Natural killer cell (primary cell): ENCODE measurements at regions of chr3 and their contacts with region 1.

Region 1: DNA sequence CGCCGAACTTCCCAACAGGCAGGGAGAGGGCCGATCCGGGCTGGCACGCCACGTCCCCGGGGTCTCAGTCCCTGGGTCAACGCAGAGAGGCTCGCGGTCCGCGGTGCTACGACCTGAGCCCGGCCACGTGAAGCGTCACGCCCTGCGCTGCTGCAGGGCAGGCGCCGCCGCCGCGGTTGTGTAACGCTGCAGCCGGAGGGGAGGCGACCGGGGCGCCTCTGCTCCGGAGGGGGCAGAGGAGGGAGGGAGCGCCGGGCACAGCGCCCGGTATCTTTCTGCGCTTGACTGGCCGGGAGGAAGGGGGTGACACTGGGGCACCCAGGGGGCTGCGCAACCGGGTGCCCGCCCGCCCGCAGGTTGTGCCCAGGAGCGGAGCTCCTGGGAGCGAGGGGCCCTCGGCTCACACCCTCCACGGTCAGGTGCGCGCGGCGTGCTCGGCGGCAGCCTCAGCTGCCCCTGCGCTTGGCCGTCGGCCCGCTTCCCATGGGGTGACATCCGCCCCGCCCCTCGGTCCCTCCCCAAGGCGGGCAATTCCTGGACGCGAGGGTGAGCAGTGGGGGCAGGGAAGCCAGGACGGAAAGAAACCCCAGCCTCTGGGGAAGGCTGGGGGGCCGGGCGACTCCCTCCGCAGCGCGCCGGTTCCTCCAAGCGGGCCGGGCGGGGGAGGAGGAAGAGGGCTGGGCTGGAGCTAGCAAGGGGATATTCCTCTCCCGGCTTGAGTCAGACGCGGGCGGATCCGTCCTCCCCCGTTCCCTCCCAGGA is 852 bp upstream of the BHLHE40 start:
- DNase-seq: peak; percentile 85 to 88
- ATAC-seq: peak; percentile 44 to 66 (median 55)
- H3K4me3 ChIP-seq: peak overlapping the region; percentile 86
- H3K4me3 Mint-ChIP-seq: peak overlapping the region; percentile 99
- H3K27ac ChIP-seq: peak overlapping the region; percentile 96
- H3K27ac Mint-ChIP-seq: peak overlapping the region; percentile 98 to 100
- H3K4me1 ChIP-seq: peaks cover 39% of the 10 kb centered on the region
- H3K4me1 Mint-ChIP-seq: peaks cover 60 to 61% of the 10 kb centered on the region in 2 donors
- H3K27me3 ChIP-seq: no peaks in the 10 kb centered on the region
- H3K27me3 Mint-ChIP-seq: no peaks in the 10 kb centered on the region
- CTCF ChIP-seq: no peak

Region 2: GRCh38 chr3:3240986-3241385 is 1737.4 kb before region 1 on chr3:
- intact Hi-C with region 1: no loop called
- DNase-seq: no peak
- ATAC-seq: no peak
- H3K4me3 ChIP-seq: no peak overlapping the region
- H3K4me3 Mint-ChIP-seq: no peak overlapping the region
- H3K27ac ChIP-seq: no peak overlapping the region
- H3K27ac Mint-ChIP-seq: no peak overlapping the region
- H3K4me1 ChIP-seq: no peaks in the 10 kb centered on the region
- H3K4me1 Mint-ChIP-seq: no peaks in the 10 kb centered on the region
- H3K27me3 ChIP-seq: no peaks in the 10 kb centered on the region
- H3K27me3 Mint-ChIP-seq: peaks cover 3 to 10% of the 10 kb centered on the region in 2 donors
- CTCF ChIP-seq: no peak

Region 3: DNA sequence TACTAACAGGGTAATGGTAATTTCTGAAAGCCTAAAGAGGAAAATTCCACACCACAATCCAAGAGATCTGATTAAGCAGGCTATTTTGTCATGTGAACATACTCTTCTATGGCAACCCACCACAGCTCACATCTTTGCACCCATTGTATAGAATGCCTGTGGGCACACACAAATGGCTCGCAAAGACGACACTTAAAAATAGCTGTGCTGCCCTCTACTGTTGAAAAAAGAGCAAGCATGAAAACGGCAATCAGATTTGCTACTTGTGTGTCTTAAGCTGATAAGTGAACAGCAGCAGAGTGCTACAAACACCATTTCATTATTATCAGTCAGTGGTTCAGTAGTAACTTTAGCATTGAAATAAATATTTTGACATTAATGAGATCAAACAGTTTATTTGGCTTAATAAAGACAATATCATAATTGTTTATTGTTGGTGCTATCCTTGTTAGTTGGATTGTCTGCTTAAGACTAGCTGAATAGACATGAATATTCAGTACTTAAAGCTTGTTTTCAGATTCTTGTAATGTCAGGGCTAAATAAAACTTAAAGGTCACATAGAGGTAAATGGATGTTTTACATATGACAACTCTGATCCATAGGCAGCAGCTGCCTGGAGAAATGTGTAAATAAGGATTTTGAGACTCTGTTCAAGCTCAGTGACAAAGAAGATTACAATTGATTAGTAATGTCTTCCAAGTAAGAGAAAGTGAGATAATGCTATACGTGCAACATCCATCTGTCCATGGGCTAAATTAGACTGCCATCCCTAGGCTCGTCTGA is 980.1 kb before region 1 on chr3:
- intact Hi-C with region 1: no loop called
- DNase-seq: peak in 1 of 2 donors; percentile 46
- ATAC-seq: peak in 2 of 3 donors; percentile 44 to 57
- H3K4me3 ChIP-seq: no peak overlapping the region
- H3K4me3 Mint-ChIP-seq: no peak overlapping the region
- H3K27ac ChIP-seq: no peak overlapping the region
- H3K27ac Mint-ChIP-seq: no peak overlapping the region
- H3K4me1 ChIP-seq: no peaks in the 10 kb centered on the region
- H3K4me1 Mint-ChIP-seq: no peaks in the 10 kb centered on the region
- H3K27me3 ChIP-seq: no peaks in the 10 kb centered on the region
- H3K27me3 Mint-ChIP-seq: no peaks in the 10 kb centered on the region
- CTCF ChIP-seq: peak; percentile 57

Region 4: DNA sequence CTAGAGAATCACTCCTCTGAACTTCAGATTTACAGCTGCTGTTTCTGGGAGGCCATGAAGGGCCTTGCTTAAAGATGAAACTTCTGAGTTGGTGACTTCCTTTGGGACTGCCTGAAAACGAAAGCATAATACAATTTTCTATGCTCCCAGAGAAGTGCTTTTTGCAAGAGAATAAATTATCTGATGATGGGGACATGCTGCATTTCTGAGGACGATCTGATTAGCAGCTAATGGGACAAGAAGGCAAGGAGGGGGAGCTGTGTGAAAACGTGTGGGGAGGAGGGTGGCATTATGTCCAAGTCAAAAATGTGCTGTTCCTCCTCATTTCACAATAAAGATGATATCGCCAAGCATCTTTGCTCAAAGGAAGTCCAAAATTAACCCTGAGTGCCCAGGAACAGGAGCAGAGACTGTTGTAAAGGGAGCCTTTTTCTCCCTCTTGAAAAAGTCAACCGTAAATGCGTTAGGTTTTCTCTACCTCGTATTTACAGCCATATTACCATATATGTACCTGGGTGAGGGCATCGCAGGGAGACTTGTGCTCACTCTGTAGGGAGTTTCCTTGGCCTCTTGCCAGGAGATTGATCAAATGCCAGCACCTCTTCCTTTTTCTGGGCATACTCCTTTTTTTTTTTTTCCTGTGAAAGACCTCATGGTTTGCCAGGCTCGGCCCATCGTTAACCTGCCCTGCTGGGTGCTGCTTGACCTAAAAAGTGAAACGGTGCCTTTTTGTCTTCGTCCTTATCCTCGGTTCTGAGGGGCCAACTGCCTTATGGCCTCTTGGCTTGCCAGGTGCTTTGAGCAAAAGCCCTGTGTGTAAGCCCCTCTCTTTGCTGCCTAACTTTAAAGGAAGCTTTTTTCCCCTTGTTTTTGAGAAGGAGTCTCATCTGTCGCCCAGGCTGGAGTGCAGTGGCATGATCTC is 473.8 kb before region 1 on chr3:
- intact Hi-C with region 1: loop called (anchors 10 kb)
- DNase-seq: peak; percentile 17 to 84
- ATAC-seq: peak; percentile 52 to 77 (median 67)
- H3K4me3 ChIP-seq: peak overlapping the region; percentile 16
- H3K4me3 Mint-ChIP-seq: peak overlapping the region; percentile 90
- H3K27ac ChIP-seq: peak overlapping the region; percentile 70
- H3K27ac Mint-ChIP-seq: peak overlapping the region; percentile 80 to 92
- H3K4me1 ChIP-seq: peaks cover 28% of the 10 kb centered on the region
- H3K4me1 Mint-ChIP-seq: peaks cover 50 to 53% of the 10 kb centered on the region in 2 donors
- H3K27me3 ChIP-seq: no peaks in the 10 kb centered on the region
- H3K27me3 Mint-ChIP-seq: no peaks in the 10 kb centered on the region
- CTCF ChIP-seq: no peak

Region 5: DNA sequence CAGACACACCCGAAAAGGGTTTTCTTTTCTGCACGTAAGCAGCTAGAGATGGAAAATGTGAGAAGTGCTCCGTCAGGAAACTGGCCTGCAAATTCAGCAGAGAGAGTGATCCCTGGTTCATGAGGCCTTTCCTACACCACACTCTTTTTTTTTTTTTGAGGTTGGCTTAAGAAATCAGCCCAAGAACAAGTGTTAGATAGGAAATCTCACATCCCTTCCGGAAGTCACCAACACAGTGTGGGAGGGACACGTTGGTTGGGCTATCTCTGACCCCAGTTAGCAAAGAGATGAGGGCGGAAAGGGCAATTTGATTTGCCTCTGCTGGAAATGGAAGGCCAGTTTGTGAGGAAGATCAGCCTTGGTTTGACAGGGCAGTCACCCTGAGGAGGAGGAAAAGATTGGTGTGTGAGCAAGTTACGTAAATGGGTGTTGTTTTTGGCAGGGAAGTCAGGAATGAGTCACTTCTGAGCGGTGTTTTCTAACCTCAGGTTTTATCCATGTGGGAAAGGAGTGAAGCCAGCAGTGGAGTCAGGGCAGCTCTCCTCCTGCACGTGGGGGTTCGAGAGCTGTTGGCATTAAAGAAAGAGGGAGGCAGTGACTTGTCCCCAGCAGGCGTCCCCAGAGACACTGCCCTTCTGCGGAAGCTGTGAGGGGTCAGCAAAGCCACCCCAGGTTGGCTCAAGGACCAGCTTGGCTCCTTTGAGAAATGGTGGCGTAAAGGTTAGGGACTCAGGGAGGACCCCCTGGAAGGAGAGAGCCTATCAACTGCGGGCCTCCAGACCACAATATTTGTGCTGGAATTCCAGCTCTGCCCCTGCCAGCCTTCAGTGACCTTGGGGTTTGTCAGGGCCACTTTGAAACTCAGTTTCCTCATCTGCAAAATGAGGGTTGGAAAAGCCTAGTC is 236.7 kb before region 1 on chr3:
- intact Hi-C with region 1: loop called (anchors 2 kb)
- DNase-seq: peak; percentile 30 to 31
- ATAC-seq: peak; percentile 27 to 59 (median 57)
- H3K4me3 ChIP-seq: no peak overlapping the region
- H3K4me3 Mint-ChIP-seq: peak overlapping the region; percentile 78
- H3K27ac ChIP-seq: peak overlapping the region; percentile 81
- H3K27ac Mint-ChIP-seq: peak overlapping the region; percentile 88 to 92
- H3K4me1 ChIP-seq: peaks cover 57% of the 10 kb centered on the region
- H3K4me1 Mint-ChIP-seq: peaks cover 77 to 78% of the 10 kb centered on the region in 2 donors
- H3K27me3 ChIP-seq: no peaks in the 10 kb centered on the region
- H3K27me3 Mint-ChIP-seq: no peaks in the 10 kb centered on the region
- CTCF ChIP-seq: no peak

Region 6: DNA sequence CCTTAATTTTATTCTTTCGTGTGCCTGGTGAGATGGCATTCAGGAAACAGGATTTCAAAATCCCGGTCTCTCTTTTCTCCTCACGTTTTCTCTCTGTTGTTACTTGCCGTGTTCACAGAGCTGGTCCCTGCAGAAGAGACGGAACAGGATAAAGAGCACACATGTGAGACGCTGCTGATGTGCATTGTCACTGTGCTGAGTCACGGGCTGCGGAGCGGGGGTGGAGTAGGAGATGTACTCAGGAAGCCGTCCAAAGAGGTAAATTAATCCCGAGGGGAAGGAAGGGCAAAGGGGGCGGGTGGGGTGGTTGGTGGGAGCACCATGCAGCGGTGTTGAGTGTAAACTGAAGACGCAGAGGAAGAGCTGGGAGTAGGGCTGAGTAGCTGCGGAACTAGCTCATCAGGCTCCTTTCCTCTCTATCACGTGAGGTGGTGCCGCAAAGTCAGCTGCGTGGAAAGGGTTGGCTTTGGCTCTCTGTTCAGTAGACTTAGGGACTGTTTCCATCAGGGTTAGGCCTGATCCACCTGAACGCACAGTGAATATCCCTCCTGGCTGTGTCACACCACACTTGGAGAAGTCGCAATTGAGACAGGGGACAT is 164.0 kb before region 1 on chr3:
- intact Hi-C with region 1: no loop called
- DNase-seq: no peak
- ATAC-seq: no peak
- H3K4me3 ChIP-seq: no peak overlapping the region
- H3K4me3 Mint-ChIP-seq: no peak overlapping the region
- H3K27ac ChIP-seq: no peak overlapping the region
- H3K27ac Mint-ChIP-seq: peak overlapping the region; percentile 45 to 51
- H3K4me1 ChIP-seq: peaks cover 2% of the 10 kb centered on the region
- H3K4me1 Mint-ChIP-seq: peaks cover 9 to 24% of the 10 kb centered on the region in 2 donors
- H3K27me3 ChIP-seq: no peaks in the 10 kb centered on the region
- H3K27me3 Mint-ChIP-seq: no peaks in the 10 kb centered on the region
- CTCF ChIP-seq: no peak

Region 7: DNA sequence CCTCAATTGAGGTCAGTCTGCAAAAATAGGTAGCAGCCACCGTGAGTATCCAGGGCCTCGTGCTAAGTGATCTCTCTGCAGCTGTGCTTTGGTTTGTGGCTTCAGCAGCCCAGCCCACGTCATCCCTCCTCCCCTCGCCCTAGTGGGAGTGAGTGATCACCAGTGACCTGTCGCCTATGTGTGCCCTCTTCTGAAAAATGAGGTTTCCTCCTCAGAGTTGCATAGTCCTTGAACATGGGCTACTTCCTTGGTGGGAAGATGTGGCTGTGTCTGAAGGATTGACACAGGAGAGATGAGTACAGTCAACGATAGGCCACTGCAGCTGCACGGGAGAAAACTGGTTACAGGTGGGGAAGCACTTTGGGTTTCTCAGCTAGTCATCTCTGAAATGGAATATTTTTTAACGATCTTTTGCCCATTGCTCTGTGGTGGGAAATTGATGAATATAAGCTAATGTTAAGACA is 143.9 kb before region 1 on chr3:
- intact Hi-C with region 1: loop called (anchors 1 kb)
- DNase-seq: peak; percentile 63 to 85
- ATAC-seq: peak; percentile 65 to 75 (median 66)
- H3K4me3 ChIP-seq: no peak overlapping the region
- H3K4me3 Mint-ChIP-seq: peak overlapping the region; percentile 63
- H3K27ac ChIP-seq: peak overlapping the region; percentile 69
- H3K27ac Mint-ChIP-seq: peak overlapping the region; percentile 88 to 89
- H3K4me1 ChIP-seq: peaks cover 61% of the 10 kb centered on the region
- H3K4me1 Mint-ChIP-seq: peaks cover 57 to 59% of the 10 kb centered on the region in 2 donors
- H3K27me3 ChIP-seq: no peaks in the 10 kb centered on the region
- H3K27me3 Mint-ChIP-seq: no peaks in the 10 kb centered on the region
- CTCF ChIP-seq: no peak

Region 8: GRCh38 chr3:4906107-4906621 is 72.2 kb before region 1 on chr3:
- intact Hi-C with region 1: loop called (anchors 1 kb)
- DNase-seq: no peak
- ATAC-seq: peak in 1 of 3 donors; percentile 27
- H3K4me3 ChIP-seq: no peak overlapping the region
- H3K4me3 Mint-ChIP-seq: peak overlapping the region; percentile 85
- H3K27ac ChIP-seq: no peak overlapping the region
- H3K27ac Mint-ChIP-seq: peak overlapping the region; percentile 90 to 95
- H3K4me1 ChIP-seq: peaks cover 35% of the 10 kb centered on the region
- H3K4me1 Mint-ChIP-seq: peaks cover 52 to 65% of the 10 kb centered on the region in 2 donors
- H3K27me3 ChIP-seq: no peaks in the 10 kb centered on the region
- H3K27me3 Mint-ChIP-seq: no peaks in the 10 kb centered on the region
- CTCF ChIP-seq: no peak

Region 9: DNA sequence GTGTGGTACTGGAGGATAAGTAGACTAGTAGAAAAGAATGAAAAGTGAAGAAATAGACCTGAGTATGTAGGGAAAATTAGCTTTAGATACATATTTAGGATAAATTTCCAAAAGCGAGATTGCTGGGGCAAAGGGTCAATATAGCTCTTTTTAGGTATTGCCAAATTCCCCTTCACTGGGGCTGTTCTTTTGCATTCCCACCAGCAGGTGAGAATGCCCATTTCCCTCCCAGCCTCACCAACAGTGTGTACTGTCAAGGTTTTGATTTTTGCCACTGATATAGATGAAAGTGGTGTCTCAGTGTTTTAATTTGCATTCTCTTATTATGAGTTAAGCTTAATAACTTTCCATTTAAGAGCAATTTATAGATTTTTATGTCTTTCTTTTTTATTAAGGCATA is 34.8 kb before region 1 on chr3:
- intact Hi-C with region 1: no loop called
- DNase-seq: peak in 1 of 2 donors; percentile 33
- ATAC-seq: no peak
- H3K4me3 ChIP-seq: no peak overlapping the region
- H3K4me3 Mint-ChIP-seq: no peak overlapping the region
- H3K27ac ChIP-seq: no peak overlapping the region
- H3K27ac Mint-ChIP-seq: no peak overlapping the region
- H3K4me1 ChIP-seq: no peaks in the 10 kb centered on the region
- H3K4me1 Mint-ChIP-seq: peaks cover 4% of the 10 kb centered on the region in 2 donors
- H3K27me3 ChIP-seq: no peaks in the 10 kb centered on the region
- H3K27me3 Mint-ChIP-seq: no peaks in the 10 kb centered on the region
- CTCF ChIP-seq: no peak

Region 10: GRCh38 chr3:5122030-5122740 is 143.8 kb after region 1 on chr3 and contains the start of gene ARL8B:
- intact Hi-C with region 1: loop called (anchors 2 kb)
- DNase-seq: peak; percentile 90 to 94
- ATAC-seq: peak; percentile 91 to 100 (median 95)
- H3K4me3 ChIP-seq: peak within 1 kb of the TSS; percentile 85
- H3K4me3 Mint-ChIP-seq: peak within 1 kb of the TSS; percentile 84
- H3K27ac ChIP-seq: peak within 1 kb of the TSS; percentile 90
- H3K27ac Mint-ChIP-seq: peak within 1 kb of the TSS; percentile 88 to 90
- H3K4me1 ChIP-seq: peaks cover 25% of the 10 kb centered on the region
- H3K4me1 Mint-ChIP-seq: peaks cover 38 to 44% of the 10 kb centered on the region in 2 donors
- H3K27me3 ChIP-seq: no peaks in the 10 kb centered on the region
- H3K27me3 Mint-ChIP-seq: no peaks in the 10 kb centered on the region
- CTCF ChIP-seq: peak; percentile 99
- total RNA-seq, gene ARL8B: 43.3 to 52.7 (median 48.9) TPM